ENCODE measurements at regions of chr5 and their contacts with region 1.

Region 1: GRCh38 chr5:172795318-172795977 is 24.5 kb upstream of the DUSP1 start:
- DNase-seq: peak; percentile 97
- H3K4me3 ChIP-seq: no peak overlapping the region
- H3K27ac ChIP-seq: peak overlapping the region; percentile 97
- H3K27me3 ChIP-seq: no peaks in the 10 kb centered on the region
- CTCF ChIP-seq: 0 out of 2 replicates have a peak, but pooled peaks have one; percentile 8

Region 2: GRCh38 chr5:173228639-173229381 is 433.4 kb after region 1 on chr5:
- CTCF ChIA-PET with region 1: interaction called, 14 read pairs
- POLR2A ChIA-PET with region 1: no interaction called
- DNase-seq: no peak
- H3K4me3 ChIP-seq: 0 out of 2 replicates have a peak overlapping the region, but pooled peaks have one; percentile 7
- H3K27ac ChIP-seq: peak overlapping the region; percentile 11
- H3K27me3 ChIP-seq: peaks cover 85% of the 10 kb centered on the region
- CTCF ChIP-seq: no peak